Caco-2 (cell line): ENCODE measurements at regions of chr9 and their contacts with region 1.

Region 1: DNA sequence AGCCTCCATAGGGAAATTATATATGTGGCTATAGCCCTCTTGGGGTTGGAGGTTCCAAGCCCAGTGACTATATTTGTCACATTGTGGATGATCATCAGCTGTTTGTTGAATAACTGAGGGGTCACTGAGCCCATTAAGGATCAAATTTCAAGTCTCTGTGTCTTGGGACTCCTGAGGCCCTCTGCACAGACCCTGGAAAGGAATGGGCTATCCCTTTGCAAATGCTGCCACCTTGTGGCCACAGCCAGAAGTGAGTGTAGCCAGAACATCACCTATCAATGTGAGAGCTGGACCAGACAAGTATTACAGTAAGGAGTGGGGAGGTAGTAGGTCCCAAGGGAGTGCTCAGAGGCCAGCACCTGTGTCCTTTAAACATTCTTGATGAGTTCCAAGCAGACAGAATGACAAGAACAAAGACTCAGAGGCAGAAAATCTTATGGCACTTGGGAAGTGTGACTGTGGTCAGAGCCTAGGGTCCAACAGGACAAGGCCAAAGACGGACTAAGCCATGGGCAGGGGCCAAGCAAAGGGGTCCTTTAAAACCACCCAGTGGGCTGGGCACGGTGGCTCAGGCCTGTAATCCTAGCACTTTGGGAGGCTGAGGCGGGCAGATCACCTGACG is 8.2 kb downstream of the RPP25L start:
- DNase-seq: peak; percentile 81 to 86
- H3K4me3 ChIP-seq: no peak overlapping the region
- H3K4me3 Mint-ChIP-seq: no peak overlapping the region
- H3K27ac Mint-ChIP-seq: no peak overlapping the region
- H3K4me1 ChIP-seq: peaks cover 12% of the 10 kb centered on the region
- H3K4me1 Mint-ChIP-seq: no peaks in the 10 kb centered on the region
- H3K27me3 ChIP-seq: no peaks in the 10 kb centered on the region
- H3K27me3 Mint-ChIP-seq: peaks cover 3% of the 10 kb centered on the region
- CTCF ChIP-seq: peak; percentile 79 to 95

Region 2: GRCh38 chr9:34252670-34253459 is 350.9 kb before region 1 on chr9:
- CTCF ChIA-PET with region 1: no interaction called
- POLR2A ChIA-PET with region 1: no interaction called
- intact Hi-C with region 1: loop called (anchors 2 kb)
- DNase-seq: peak; percentile 70 to 80
- H3K4me3 ChIP-seq: no peak overlapping the region
- H3K4me3 Mint-ChIP-seq: no peak overlapping the region
- H3K27ac Mint-ChIP-seq: no peak overlapping the region
- H3K4me1 ChIP-seq: no peaks in the 10 kb centered on the region
- H3K4me1 Mint-ChIP-seq: no peaks in the 10 kb centered on the region
- H3K27me3 ChIP-seq: no peaks in the 10 kb centered on the region
- H3K27me3 Mint-ChIP-seq: no peaks in the 10 kb centered on the region
- CTCF ChIP-seq: peak; percentile 92 to 93

Region 3: DNA sequence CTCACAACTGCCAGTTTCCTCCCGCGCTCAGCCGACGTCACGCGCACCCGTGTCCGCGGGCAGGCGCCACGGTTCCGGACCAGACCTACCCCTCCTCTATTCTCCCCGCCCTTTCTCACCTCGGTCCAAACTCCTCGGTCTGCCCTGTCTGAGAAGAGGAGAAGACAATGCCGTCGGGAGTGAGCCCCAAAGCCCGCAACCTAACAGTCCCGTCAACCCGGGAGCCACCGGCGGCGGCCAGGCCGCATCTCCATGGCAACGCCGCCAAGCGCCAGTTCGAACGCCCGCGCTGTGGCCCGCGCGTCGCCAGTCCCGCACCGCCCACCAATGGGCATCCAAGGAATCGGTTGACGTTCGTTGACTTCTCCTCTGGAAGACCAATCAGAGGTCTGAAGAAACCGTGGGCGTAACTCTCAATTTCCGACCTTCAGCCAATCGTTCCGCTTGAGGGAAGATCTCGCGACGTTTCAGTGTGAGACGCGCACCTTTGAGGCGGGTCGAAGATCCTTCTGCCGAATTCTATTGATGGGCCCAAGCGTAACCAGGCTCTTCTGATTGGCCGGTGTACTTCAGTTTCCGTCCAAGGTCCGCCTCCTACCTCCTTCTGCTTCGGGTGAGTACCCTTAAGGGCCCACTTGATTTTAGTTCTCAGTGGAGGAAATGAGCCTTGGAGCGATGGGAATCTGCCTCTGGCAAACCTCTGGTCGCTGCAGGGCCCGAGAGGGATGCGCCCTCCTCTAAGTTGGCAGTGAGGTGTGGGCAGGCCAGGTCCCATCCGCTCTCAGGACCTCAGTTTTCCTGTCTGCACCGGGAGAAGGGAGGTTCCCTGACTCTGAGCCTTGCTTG is 274.5 kb before region 1 on chr9 and contains the starts of genes KIF24 and NUDT2:
- CTCF ChIA-PET with region 1: no interaction called
- POLR2A ChIA-PET with region 1: no interaction called
- intact Hi-C with region 1: loop called (anchors 2 kb)
- DNase-seq: peak; percentile 98 to 99
- H3K4me3 ChIP-seq: peak within 1 kb of the TSS; percentile 96
- H3K4me3 Mint-ChIP-seq: peak within 1 kb of the TSS; percentile 83
- H3K27ac Mint-ChIP-seq: peak within 1 kb of the TSS; percentile 94
- H3K4me1 ChIP-seq: no peaks in the 10 kb centered on the region
- H3K4me1 Mint-ChIP-seq: peaks cover 13% of the 10 kb centered on the region
- H3K27me3 ChIP-seq: no peaks in the 10 kb centered on the region
- H3K27me3 Mint-ChIP-seq: no peaks in the 10 kb centered on the region
- CTCF ChIP-seq: no peak
- total RNA-seq, gene KIF24: 3.9 and 4.4 TPM in 2 replicates
- total RNA-seq, gene NUDT2: 14.4 and 15.0 TPM in 2 replicates

Region 4: GRCh38 chr9:34403554-34404380 is 200.0 kb before region 1 on chr9:
- CTCF ChIA-PET with region 1: interaction called, 14 read pairs
- POLR2A ChIA-PET with region 1: no interaction called
- intact Hi-C with region 1: loop called (anchors 1 kb)
- DNase-seq: peak; percentile 78 to 83
- H3K4me3 ChIP-seq: no peak overlapping the region
- H3K4me3 Mint-ChIP-seq: no peak overlapping the region
- H3K27ac Mint-ChIP-seq: no peak overlapping the region
- H3K4me1 ChIP-seq: no peaks in the 10 kb centered on the region
- H3K4me1 Mint-ChIP-seq: no peaks in the 10 kb centered on the region
- H3K27me3 ChIP-seq: no peaks in the 10 kb centered on the region
- H3K27me3 Mint-ChIP-seq: no peaks in the 10 kb centered on the region
- CTCF ChIP-seq: peak; percentile 96

Region 5: DNA sequence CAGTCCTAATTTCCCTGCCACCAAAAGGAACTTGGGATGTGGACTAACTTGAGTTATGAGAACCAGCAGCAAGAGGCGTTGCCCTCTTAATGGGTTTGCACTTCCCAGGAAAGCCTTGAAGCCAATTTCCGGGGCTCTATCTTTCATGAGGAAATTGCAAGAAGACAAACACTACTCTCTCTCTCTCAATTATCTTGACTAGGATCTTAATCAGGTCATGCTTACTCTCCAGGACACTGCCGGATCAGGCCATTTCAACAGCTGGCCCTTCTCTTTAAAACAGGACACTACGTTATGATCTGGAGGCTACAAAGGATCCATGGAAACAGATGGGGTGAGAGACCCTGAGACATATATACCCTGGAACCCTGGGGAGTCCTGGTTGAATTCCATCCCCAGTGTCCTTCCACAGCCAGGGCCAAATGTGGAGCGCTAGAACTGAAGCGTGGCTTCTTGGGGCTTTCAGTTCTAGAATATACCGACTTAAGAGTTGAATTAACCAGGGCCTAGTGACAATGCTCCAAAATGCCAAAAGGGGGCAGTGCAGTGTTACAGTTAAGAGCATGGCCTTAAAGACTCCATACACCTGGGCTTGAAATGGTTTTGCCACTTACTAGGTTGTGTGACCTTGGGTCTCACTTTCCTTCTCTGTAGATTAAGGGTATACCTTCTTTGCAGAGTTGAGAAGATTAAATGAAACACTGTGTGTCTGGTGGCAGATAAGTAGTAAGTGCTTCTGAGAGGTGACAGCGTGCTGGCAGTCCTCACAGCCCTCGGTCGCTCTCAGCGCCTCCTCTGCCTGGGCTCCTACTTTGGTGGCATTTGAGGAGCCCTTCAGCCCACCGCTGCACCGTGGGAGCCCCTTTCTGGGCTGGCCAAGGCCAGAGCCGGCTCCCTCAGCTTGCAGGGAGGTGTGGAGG is 166.5 kb before region 1 on chr9:
- CTCF ChIA-PET with region 1: interaction called, 3 read pairs
- POLR2A ChIA-PET with region 1: no interaction called
- intact Hi-C with region 1: loop called (anchors 1 kb)
- DNase-seq: peak; percentile 54 to 65
- H3K4me3 ChIP-seq: no peak overlapping the region
- H3K4me3 Mint-ChIP-seq: no peak overlapping the region
- H3K27ac Mint-ChIP-seq: no peak overlapping the region
- H3K4me1 ChIP-seq: no peaks in the 10 kb centered on the region
- H3K4me1 Mint-ChIP-seq: no peaks in the 10 kb centered on the region
- H3K27me3 ChIP-seq: no peaks in the 10 kb centered on the region
- H3K27me3 Mint-ChIP-seq: no peaks in the 10 kb centered on the region
- CTCF ChIP-seq: peak; percentile 67 to 69

Region 6: GRCh38 chr9:34500623-34501267 is 103.0 kb before region 1 on chr9:
- CTCF ChIA-PET with region 1: interaction called, 3 read pairs
- POLR2A ChIA-PET with region 1: no interaction called
- intact Hi-C with region 1: loop called (anchors 2 kb)
- DNase-seq: peak; percentile 54 to 76
- H3K4me3 ChIP-seq: no peak overlapping the region
- H3K4me3 Mint-ChIP-seq: no peak overlapping the region
- H3K27ac Mint-ChIP-seq: no peak overlapping the region
- H3K4me1 ChIP-seq: no peaks in the 10 kb centered on the region
- H3K4me1 Mint-ChIP-seq: no peaks in the 10 kb centered on the region
- H3K27me3 ChIP-seq: no peaks in the 10 kb centered on the region
- H3K27me3 Mint-ChIP-seq: peaks cover 17% of the 10 kb centered on the region
- CTCF ChIP-seq: peak; percentile 93 to 96

Region 7: DNA sequence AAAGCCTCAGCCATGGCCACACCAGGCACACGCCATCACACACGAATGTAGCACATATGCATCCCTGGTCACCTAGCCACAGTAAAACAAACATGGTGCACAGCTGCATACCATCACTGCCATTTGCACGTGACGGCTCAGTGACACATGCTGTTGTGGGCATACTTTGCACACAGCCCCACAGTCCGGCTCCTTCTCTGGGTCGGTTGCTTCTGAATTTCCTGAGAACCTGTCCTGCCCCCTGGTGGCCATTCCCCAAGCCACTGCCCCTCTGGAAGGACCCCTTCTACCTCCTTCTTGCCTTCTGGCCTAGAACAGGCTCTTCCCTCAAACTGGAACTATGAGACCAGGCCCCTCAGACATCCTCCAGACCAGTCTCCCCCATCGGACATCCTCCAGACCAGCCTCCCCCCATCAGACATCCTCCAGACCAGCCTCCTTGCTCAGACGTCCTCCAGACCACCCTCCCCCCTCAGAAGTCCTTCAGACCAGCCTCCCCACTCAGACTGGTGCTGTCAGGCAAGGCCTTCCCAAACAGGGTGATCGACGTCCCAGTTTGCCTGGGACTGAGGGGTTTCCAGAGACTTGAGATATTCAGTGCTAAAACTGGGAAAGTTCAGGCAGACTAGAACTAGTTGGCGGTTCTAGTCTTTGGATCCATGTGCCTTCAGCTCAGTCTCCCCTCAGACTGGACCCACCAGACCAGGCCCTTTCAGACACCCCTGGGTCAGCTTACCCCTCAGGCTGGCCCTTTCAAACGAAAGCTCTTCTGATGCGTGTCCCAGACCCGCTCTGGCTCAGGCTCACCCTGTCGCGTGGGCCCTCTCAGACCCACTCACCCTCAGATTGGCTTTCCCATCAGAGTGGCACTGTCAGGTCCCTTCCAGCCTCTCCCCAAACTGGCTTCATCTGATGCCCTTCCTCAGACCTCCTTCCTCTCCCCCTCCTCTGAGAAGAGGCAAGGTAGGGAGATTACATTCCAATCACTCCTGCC is 56.6 kb before region 1 on chr9:
- CTCF ChIA-PET with region 1: interaction called, 6 read pairs
- POLR2A ChIA-PET with region 1: no interaction called
- intact Hi-C with region 1: loop called (anchors 1 kb)
- DNase-seq: peak; percentile 61 to 67
- H3K4me3 ChIP-seq: no peak overlapping the region
- H3K4me3 Mint-ChIP-seq: no peak overlapping the region
- H3K27ac Mint-ChIP-seq: no peak overlapping the region
- H3K4me1 ChIP-seq: no peaks in the 10 kb centered on the region
- H3K4me1 Mint-ChIP-seq: no peaks in the 10 kb centered on the region
- H3K27me3 ChIP-seq: no peaks in the 10 kb centered on the region
- H3K27me3 Mint-ChIP-seq: peaks cover 13% of the 10 kb centered on the region
- CTCF ChIP-seq: peak; percentile 58 to 60

Region 8: GRCh38 chr9:34559624-34560452 is 43.9 kb before region 1 on chr9:
- CTCF ChIA-PET with region 1: no interaction called
- POLR2A ChIA-PET with region 1: no interaction called
- intact Hi-C with region 1: no loop called
- DNase-seq: no peak
- H3K4me3 ChIP-seq: no peak overlapping the region
- H3K4me3 Mint-ChIP-seq: no peak overlapping the region
- H3K27ac Mint-ChIP-seq: no peak overlapping the region
- H3K4me1 ChIP-seq: no peaks in the 10 kb centered on the region
- H3K4me1 Mint-ChIP-seq: no peaks in the 10 kb centered on the region
- H3K27me3 ChIP-seq: no peaks in the 10 kb centered on the region; the same call in none of the 2 replicates
- H3K27me3 Mint-ChIP-seq: peaks cover 4% of the 10 kb centered on the region
- CTCF ChIP-seq: no peak